GM12878 (cell line): ENCODE measurements at regions of chr7 and their contacts with region 1.

Region 1: GRCh38 chr7:117485016-117485655 is 5.3 kb downstream of the CFTR start:
- DNase-seq: no peak
- ATAC-seq: no peak
- H3K4me3 ChIP-seq: no peak overlapping the region
- H3K27ac ChIP-seq: no peak overlapping the region
- H3K4me1 ChIP-seq: no peaks in the 10 kb centered on the region
- H3K27me3 ChIP-seq: peaks cover 0 to 2% of the 10 kb centered on the region in 2 experiments; a peak in 1 of 4 replicates
- CTCF ChIP-seq: no peak
- EP300 ChIP-seq: no peak
- POLR2A ChIP-seq: no peak
- RAD21 ChIP-seq: no peak

Region 2: DNA sequence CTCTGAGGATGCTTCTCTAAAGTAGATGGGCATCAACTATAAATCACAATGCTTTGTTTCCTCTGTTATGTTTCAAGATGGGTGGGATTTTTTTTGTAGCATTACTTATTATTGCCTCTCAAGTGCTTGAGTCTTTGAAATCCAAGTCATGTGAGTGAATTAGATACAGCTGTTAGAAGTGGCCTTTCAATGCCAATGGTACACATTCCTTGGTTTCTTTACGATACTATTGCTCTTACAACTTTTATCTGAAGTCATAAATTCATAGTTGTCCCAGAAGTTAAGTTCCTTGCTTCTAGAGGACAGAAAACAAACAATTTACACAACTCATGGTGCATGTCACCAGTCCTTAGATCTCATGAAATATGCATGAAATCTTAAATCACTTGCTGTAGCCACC is 10.2 kb after region 1 on chr7:
- CTCF ChIA-PET with region 1: interaction called, 6 read pairs
- POLR2A ChIA-PET with region 1: interaction called, 4 read pairs
- RAD21 ChIA-PET with region 1: no interaction called
- SMC1A ChIA-PET with region 1: interaction called, 22 read pairs
- in situ Hi-C with region 1: no loop called
- intact Hi-C with region 1: no loop called
- DNase-seq: no peak
- ATAC-seq: no peak
- H3K4me3 ChIP-seq: no peak overlapping the region
- H3K27ac ChIP-seq: no peak overlapping the region
- H3K4me1 ChIP-seq: no peaks in the 10 kb centered on the region
- H3K27me3 ChIP-seq: no peaks in the 10 kb centered on the region
- CTCF ChIP-seq: no peak
- EP300 ChIP-seq: no peak
- POLR2A ChIP-seq: no peak
- RAD21 ChIP-seq: no peak